ENCODE measurements at regions of chr9 and their contacts with region 1.

Region 1: DNA sequence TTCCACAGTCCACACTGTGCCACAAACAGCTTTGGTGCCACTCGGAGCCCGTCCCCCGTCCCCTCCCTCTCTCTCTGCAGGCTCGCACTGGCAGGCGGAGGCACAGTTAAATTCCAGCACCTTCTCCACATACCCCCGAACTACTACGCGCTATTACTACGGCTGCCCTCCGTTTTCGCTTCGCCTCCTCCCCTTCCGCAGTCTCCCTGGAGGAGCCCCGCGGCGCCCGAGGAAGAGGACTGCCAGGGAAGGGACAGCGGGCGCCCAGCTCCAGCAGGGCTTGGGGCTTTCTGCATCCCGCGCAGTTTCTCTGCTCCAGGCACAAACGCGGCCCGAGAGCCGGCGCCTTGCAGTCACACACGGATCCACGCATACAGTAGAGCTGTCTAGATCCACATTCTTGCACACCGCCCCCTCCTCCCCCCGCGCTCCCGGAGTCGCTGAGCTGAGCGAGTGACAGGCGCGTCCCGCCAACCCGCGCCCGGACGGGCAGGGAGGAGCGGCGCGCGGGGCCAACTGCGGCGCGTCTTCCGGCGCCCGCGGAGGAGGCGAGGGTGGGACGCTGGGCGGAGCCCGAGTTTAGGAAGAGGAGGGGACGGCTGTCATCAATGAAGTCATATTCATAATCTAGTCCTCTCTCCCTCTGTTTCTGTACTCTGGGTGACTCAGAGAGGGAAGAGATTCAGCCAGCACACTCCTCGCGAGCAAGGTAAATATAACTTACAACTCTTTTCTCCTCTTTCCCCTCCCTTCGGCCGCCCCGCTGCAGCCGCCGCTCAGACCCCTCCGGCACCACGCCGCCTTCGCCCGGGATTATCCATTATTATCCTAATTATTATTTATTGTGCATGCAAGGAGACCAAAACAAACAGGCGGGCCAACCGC is at the start of gene SMARCA2:
- DNase-seq: peak; percentile 100
- ATAC-seq: peak; percentile 90
- total RNA-seq, gene SMARCA2: 98.4 TPM

Region 2: DNA sequence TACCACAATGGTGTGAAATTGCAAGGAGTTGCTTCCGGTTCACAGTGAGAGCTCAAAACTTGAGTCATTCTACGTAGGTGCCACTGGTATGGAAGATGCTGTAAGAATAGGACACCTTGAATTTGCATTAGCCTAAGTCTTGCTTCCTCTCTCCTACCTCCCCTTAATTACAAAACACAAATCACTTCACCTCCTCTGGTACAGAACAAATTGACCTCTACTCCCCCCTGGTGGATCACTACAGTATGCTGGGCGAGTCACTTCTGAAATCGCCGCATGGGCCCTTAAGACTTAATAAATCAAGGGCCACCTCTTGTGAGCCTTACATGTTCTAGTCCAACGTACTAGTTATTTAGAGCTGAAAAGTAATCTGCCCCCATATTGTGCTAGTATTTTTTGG is 145.1 kb before region 1 on chr9:
- intact Hi-C with region 1: no loop called
- DNase-seq: no peak
- ATAC-seq: no peak

Region 3: GRCh38 chr9:1880038-1880565 is 134.8 kb before region 1 on chr9:
- intact Hi-C with region 1: no loop called
- DNase-seq: no peak
- ATAC-seq: no peak

Region 4: DNA sequence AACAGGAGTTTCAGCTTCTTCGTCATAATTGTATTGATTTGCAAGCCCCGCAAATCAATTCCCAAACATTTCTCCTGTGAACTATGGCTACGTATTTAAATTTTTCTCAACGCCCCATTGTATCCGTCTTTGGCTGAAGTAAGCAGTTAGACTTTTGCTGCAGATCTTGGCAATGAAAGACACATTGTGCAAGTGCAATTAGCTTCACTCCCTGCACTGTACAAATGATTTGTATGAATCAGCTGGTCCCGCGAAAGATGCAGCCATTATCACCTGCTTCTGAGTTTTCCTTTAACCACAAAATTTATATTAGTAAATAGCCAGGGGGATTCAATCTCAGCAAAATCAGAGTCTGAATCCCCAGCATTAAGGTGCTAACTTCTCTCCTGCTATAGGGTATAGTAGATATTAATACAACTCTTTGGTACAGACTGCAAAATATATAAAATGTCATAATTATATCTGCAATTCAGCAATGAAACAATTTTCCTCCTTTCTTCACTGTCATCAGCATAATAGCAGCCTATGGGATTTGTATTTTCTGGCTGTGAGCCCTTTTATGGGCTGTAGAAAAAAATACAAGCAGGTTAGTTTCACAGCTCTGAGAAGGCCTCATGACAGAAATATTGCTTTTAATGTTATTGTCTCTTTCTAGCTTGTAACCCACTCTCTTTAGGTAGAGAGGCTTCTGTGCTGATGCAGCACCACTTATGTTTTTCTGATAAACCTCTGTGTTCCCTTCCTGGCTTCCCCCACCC is 68.2 kb before region 1 on chr9:
- intact Hi-C with region 1: no loop called
- DNase-seq: no peak
- ATAC-seq: no peak

Region 5: DNA sequence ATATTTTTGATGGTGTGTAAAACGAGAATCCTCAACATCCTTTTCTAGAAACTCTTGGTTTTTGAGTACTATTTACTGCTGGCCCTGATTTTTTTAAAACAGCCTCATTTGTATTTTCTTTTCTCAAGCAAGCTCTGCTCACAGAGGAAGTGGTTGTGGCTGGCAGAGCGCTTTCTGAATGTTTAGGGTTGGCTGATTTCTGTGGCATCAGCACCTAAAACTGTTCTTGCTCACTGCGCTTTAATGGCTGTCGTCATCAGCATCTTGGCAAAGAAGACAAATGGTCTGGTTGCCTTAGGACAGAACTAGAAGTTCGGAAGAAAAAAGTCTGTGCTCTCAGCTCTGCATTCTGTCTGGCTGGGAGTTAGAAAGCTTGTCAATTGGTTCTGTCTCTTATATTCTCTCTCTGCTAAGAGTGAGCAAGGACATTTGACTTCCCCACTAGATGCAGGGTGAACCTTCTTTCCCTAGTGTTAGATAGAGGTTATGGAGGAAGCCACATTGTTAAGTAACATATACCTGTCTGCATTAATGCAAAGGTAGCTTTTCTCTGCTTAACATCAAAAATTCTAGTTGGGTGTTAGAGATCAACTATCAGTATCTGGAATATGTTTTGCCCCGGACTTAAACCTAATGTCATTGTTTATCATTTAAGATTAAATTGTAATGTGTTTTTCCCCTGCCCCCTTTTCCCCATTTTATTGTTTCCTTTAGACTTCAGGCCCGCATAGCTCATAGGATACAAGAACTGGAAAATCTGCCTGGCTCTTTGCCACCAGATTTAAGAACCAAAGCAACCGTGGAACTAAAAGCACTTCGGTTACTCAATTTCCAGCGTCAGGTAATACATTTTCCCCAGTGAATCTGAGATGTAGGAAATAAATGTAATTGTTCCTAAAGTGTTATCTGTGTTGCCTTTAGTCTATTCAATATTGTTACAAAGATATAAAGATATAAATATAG is 39.2 kb after region 1 on chr9:
- intact Hi-C with region 1: loop called (anchors 5 kb)
- DNase-seq: no peak
- ATAC-seq: peak; percentile 28

Region 6: DNA sequence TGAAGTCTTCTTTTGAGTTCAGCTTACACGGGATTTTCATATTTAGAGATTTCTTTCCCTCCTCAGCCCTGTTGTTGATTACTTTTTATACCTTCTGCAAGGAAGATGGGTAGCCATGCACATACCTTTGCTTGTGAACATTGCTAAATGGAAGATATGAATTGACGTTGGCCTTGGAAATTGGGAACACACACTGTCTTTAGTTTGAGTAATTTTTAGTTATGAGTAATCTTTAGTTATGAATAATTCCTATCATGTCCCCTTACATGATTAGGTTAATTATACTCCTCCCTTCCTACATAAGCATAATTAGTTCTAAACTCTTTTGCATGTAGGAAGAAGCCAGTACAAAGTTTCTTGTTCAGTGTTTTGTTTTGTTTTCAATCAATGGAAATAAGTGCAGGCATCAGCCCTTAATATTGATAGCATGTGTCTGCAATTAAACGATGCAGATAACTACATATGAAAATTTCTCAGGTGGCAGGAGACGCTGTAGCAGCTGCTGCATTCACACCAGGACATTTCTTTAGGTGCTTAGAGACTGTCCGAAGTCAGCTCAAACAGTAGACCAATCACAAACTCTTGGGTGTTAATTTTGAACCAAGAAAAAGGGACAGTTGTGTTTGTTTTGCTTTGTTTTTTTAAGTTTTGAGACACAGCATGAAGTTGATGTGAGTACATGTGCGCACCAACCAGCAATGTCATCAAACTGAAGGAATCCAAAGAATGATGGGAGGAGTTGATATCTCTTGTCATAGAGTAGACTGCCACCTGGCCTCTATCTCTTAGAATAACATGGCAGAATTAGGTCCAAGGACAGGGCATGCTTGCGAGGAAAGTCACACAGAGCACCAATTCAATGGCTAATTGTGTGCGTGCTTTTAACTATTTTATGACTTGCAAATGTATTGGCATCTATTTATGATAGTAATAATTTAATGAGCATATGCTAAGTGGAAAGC is 51.7 kb after region 1 on chr9:
- intact Hi-C with region 1: loop called (anchors 5 kb)
- DNase-seq: no peak
- ATAC-seq: peak; percentile 50

Region 7: GRCh38 chr9:2087500-2088313 is 72.8 kb after region 1 on chr9:
- intact Hi-C with region 1: loop called (anchors 5 kb)
- DNase-seq: no peak
- ATAC-seq: no peak

Region 8: DNA sequence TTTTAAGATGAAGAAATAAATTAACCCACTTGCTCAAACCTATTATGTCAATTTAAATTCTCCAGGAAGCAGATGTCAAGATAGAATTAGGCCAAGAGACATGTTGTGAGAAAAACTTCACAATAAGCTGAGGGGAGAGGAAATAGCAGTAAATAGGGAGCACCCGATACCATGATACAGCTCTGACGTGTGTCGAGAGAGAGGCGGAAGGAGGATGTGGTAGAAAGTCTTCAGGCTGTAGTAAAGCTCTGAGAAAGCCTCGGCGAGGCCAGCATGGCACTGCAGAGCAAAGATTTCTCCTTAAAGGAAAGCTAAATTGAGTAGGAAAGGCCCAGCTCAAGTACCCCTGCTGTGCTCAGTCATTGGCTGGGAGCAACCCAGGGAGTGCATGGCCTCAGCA is 835.0 kb after region 1 on chr9:
- intact Hi-C with region 1: loop called (anchors 10 kb)
- DNase-seq: no peak
- ATAC-seq: no peak

Measured in Right ventricle myocardium inferior (tissue), 1 donor.